ENCODE measurements at regions of chr1 and their contacts with region 1.

Region 1: DNA sequence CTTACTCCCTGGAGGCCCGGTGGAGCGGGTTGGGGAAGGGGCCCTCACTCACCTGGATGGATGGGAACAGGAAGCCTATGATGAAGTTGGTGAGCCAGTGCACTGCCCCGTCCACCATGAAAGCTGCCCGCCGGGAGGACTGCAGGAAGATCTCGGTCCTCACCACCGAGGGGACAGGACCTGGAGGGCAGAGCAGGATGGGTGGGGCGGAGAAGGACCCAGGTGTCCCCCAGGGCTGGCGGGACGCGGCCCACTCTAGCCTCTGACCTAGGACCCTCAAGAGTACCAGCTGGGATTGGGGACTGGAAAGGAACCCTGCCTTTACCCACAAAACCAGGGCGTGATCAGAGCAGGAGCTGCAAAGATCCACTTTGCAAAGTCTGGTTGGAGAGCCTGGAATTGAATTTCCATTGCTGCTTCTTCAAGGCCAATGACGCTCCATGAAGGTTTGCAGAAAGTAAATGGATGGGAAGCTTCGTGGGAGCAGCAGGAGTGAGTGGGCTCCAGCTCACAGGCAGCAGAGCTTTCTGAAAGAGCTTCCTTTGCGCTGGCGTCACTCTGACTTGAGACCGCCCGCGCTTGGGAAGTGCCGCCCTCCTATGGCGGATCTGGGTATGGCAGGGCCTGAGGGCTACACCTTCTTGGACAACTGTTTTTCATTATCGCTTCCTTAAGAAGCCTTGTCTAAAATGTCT is 21.4 kb downstream of the SLC2A7 start:
- DNase-seq: peak; percentile 90
- ATAC-seq: peak; percentile 94
- H3K4me3 Mint-ChIP-seq: no peak overlapping the region
- H3K27ac Mint-ChIP-seq: peak overlapping the region; percentile 25
- H3K4me1 Mint-ChIP-seq: peaks cover 14% of the 10 kb centered on the region
- H3K27me3 Mint-ChIP-seq: peaks cover 13% of the 10 kb centered on the region

Region 2: DNA sequence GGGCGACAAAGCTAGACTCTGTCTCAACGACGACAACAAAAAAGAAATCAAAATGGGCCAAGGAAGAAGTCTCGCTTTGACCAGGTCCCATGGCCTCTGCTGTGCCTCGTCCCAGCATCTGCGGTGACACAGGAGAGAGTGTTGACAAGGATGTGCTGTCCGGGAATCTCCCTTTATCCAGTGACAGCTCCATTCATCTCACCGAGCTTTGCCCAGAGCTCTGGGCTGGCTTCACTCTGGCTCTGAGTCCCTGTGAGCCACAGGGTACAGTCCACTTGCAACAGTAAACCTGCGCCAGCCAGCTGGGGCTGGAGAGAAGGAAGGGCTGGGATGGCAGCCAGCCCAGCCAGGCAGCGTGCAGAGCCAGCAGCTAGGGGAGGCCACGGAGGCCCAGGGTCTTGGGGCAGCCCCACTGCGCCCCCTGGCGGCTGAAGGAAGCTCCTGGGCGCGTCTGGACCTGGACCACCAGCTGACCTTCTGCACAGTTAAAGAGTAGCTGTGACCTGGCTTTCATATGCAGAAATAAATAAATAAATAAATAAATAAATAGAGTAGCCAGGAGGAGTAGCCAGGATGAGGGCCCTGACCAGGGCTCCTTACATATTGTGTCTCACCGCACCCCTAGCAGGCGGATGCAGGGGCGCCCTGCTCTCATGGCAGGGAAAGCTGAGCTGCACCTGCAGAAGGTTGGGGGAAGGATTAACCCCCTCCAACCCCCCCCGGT is 156.0 kb before region 1 on chr1:
- CTCF ChIA-PET with region 1: interaction called, 27 read pairs
- DNase-seq: peak; percentile 82
- ATAC-seq: peak; percentile 94
- H3K4me3 Mint-ChIP-seq: no peak overlapping the region
- H3K27ac Mint-ChIP-seq: no peak overlapping the region
- H3K4me1 Mint-ChIP-seq: peaks cover 8% of the 10 kb centered on the region
- H3K27me3 Mint-ChIP-seq: peaks cover 2% of the 10 kb centered on the region

Region 3: GRCh38 chr1:8913111-8913856 is 91.6 kb before region 1 on chr1:
- CTCF ChIA-PET with region 1: interaction called, 188 read pairs
- DNase-seq: no peak
- ATAC-seq: no peak
- H3K4me3 Mint-ChIP-seq: no peak overlapping the region
- H3K27ac Mint-ChIP-seq: no peak overlapping the region
- H3K4me1 Mint-ChIP-seq: peaks cover 30% of the 10 kb centered on the region
- H3K27me3 Mint-ChIP-seq: no peaks in the 10 kb centered on the region

Region 4: GRCh38 chr1:8955406-8955805 is 49.4 kb before region 1 on chr1:
- CTCF ChIA-PET with region 1: interaction called, 11 read pairs
- DNase-seq: no peak
- ATAC-seq: no peak
- H3K4me3 Mint-ChIP-seq: no peak overlapping the region
- H3K27ac Mint-ChIP-seq: no peak overlapping the region
- H3K4me1 Mint-ChIP-seq: peaks cover 43% of the 10 kb centered on the region
- H3K27me3 Mint-ChIP-seq: no peaks in the 10 kb centered on the region

Region 5: DNA sequence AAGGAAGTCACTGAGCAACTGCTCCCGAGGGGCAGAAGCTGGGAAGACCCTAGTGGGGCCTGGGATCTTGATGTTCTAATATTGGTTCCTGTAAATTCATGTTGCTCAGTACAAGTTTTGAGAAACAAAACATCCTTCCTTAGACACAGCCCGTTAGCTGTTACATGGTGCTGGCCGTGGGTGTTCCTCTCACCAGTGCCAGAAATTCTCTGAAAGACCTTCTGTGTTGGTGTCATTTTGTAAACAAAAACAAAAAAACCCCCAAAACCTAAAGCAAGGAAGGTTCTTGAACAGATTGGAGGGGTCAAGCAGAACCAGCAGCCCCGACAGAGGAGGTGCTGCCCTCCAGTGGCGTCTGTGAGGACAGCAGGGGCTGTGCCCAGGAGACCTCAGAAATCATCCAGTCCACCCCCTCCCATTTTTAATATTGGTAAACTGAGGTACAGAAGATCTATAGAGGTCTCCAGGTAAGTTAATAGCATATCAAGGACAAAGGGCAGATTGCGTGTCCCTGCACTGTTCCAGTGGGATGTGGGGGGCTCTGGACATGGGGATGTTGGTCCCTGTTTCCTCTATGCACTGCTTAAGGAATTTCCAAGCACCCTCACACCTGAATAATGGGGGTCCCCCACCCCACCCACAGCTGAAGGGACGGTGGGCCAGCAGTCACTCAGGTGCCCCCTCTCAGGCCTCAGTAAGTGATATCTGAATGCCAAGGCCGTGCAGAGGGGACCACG is 16.8 kb before region 1 on chr1:
- CTCF ChIA-PET with region 1: interaction called, 88 read pairs
- DNase-seq: peak; percentile 84
- ATAC-seq: peak; percentile 65
- H3K4me3 Mint-ChIP-seq: peak overlapping the region; percentile 32
- H3K27ac Mint-ChIP-seq: peak overlapping the region; percentile 84
- H3K4me1 Mint-ChIP-seq: peaks cover 62% of the 10 kb centered on the region
- H3K27me3 Mint-ChIP-seq: no peaks in the 10 kb centered on the region

Region 6: GRCh38 chr1:9101510-9102146 is 96.8 kb after region 1 on chr1:
- CTCF ChIA-PET with region 1: interaction called, 23 read pairs
- DNase-seq: peak; percentile 61
- ATAC-seq: peak; percentile 85
- H3K4me3 Mint-ChIP-seq: no peak overlapping the region
- H3K27ac Mint-ChIP-seq: no peak overlapping the region
- H3K4me1 Mint-ChIP-seq: no peaks in the 10 kb centered on the region
- H3K27me3 Mint-ChIP-seq: no peaks in the 10 kb centered on the region

Region 7: GRCh38 chr1:9473032-9473792 is 468.4 kb after region 1 on chr1:
- CTCF ChIA-PET with region 1: no interaction called
- DNase-seq: no peak
- ATAC-seq: no peak
- H3K4me3 Mint-ChIP-seq: no peak overlapping the region
- H3K27ac Mint-ChIP-seq: no peak overlapping the region
- H3K4me1 Mint-ChIP-seq: no peaks in the 10 kb centered on the region
- H3K27me3 Mint-ChIP-seq: peaks cover 26% of the 10 kb centered on the region

Measured in activated CD8-positive, alpha-beta memory T cell treated with anti-CD3 and anti-CD28 coated beads, Interleukin-2, amount 10 ng/mL, durations not matched to agents 7 days and 5 days (primary cell).